Activated CD8-positive, alpha-beta memory T cell treated with anti-CD3 and anti-CD28 coated beads, Interleukin-2, amount 10 ng/mL, durations not matched to agents 7 days and 5 days (primary cell): ENCODE measurements at regions of chr20 and their contacts with region 1.

Region 1: DNA sequence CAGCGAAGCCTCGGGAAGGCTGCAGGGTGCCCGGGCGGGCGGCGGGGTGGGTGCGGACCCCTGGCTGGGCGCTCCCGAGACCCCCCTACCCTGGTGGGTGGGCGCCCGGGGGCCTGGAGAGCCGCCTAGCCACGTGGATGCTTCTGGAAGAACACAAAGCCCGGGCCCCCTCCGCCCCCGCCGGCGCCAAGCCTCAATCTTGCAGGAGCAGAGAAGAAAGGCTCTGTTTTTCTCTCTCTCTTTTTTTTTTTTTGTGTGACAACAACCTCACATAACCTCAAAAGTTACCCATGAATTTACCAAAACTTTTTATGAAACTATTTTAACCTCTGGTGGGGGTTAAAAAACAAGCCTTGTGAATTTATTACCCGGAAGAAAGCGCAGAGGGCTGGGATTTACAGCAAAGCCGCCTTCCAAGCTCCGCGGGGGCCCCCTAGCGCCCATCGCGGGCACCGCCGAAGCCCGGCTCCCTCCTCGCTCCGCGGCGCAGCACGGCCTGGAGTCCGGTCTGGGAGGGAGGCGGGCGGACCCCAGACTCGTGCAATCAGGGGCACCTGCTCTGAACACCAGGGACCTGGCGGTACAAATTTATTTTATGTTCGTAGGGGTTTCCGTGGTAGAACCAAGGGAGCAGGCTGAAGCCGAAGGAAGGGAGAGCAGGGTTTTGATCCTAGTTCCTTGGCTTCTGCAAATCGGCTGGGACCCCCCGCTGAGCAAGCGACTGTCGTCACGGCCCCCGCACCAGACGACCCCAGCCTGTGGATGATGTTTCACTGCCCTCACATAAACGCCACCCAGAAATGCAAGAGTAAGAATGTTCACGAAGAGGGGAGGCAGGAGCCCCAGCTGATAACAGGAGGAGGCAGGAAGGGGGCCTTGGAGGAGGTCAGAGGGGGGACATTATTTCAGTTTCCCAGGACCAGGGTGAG is 58.9 kb downstream of the ZNF831 start:
- DNase-seq: peak; percentile 82
- ATAC-seq: peak; percentile 98
- H3K4me3 Mint-ChIP-seq: peak overlapping the region; percentile 62
- H3K27ac Mint-ChIP-seq: no peak overlapping the region
- H3K4me1 Mint-ChIP-seq: peaks cover 7% of the 10 kb centered on the region
- H3K27me3 Mint-ChIP-seq: peaks cover 2% of the 10 kb centered on the region

Region 2: GRCh38 chr20:58864350-58864749 is 358.2 kb before region 1 on chr20:
- CTCF ChIA-PET with region 1: interaction called, 10 read pairs
- DNase-seq: no peak
- ATAC-seq: peak; percentile 20
- H3K4me3 Mint-ChIP-seq: no peak overlapping the region
- H3K27ac Mint-ChIP-seq: no peak overlapping the region
- H3K4me1 Mint-ChIP-seq: no peaks in the 10 kb centered on the region
- H3K27me3 Mint-ChIP-seq: peaks cover 50% of the 10 kb centered on the region

Region 3: DNA sequence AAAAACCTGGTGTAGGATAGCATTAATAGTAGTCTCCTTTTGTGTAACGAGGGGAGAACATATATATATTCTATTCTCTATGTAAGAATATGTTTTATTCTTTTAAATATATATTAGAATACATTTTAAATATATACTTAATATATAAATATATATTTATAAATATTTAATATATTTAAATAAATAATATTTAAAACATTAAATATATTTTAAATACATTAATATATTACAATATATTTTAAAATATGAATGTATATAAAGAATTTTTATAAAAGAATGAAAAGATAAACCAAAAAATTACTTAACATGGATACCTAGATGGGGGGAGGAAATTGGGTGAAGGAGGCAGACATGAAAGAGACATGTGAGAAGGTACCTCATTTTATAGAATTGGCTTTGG is 111.9 kb before region 1 on chr20:
- CTCF ChIA-PET with region 1: interaction called, 11 read pairs
- DNase-seq: no peak
- ATAC-seq: no peak
- H3K4me3 Mint-ChIP-seq: no peak overlapping the region
- H3K27ac Mint-ChIP-seq: no peak overlapping the region
- H3K4me1 Mint-ChIP-seq: no peaks in the 10 kb centered on the region
- H3K27me3 Mint-ChIP-seq: peaks cover 2% of the 10 kb centered on the region

Region 4: GRCh38 chr20:59403261-59403961 is 180.9 kb after region 1 on chr20:
- CTCF ChIA-PET with region 1: interaction called, 24 read pairs
- DNase-seq: peak; percentile 68
- ATAC-seq: peak; percentile 73
- H3K4me3 Mint-ChIP-seq: no peak overlapping the region
- H3K27ac Mint-ChIP-seq: no peak overlapping the region
- H3K4me1 Mint-ChIP-seq: no peaks in the 10 kb centered on the region
- H3K27me3 Mint-ChIP-seq: peaks cover 30% of the 10 kb centered on the region